Prostate gland (tissue), 2 donors: ENCODE measurements at regions of chr16 and their contacts with region 1.

Region 1: GRCh38 chr16:17301593-17302135 is 169.1 kb downstream of the XYLT1 start:
- DNase-seq: no peak
- H3K4me3 ChIP-seq: no peak overlapping the region
- H3K27ac ChIP-seq: no peak overlapping the region
- H3K4me1 ChIP-seq: peaks cover 19% of the 10 kb centered on the region
- H3K27me3 ChIP-seq: no peaks in the 10 kb centered on the region
- CTCF ChIP-seq: no peak
- POLR2A ChIP-seq: no peak

Region 2: GRCh38 chr16:17149904-17150483 is 151.7 kb before region 1 on chr16:
- intact Hi-C with region 1: no loop called
- DNase-seq: no peak
- H3K4me3 ChIP-seq: no peak overlapping the region
- H3K27ac ChIP-seq: no peak overlapping the region
- H3K4me1 ChIP-seq: no peaks in the 10 kb centered on the region
- H3K27me3 ChIP-seq: no peaks in the 10 kb centered on the region
- CTCF ChIP-seq: no peak
- POLR2A ChIP-seq: no peak

Region 3: GRCh38 chr16:17194190-17194780 is 107.4 kb before region 1 on chr16:
- intact Hi-C with region 1: no loop called
- DNase-seq: peak; percentile 14
- H3K4me3 ChIP-seq: no peak overlapping the region
- H3K27ac ChIP-seq: no peak overlapping the region
- H3K4me1 ChIP-seq: no peaks in the 10 kb centered on the region
- H3K27me3 ChIP-seq: no peaks in the 10 kb centered on the region
- CTCF ChIP-seq: peak; percentile 22 to 54 (median 39)
- POLR2A ChIP-seq: no peak

Region 4: DNA sequence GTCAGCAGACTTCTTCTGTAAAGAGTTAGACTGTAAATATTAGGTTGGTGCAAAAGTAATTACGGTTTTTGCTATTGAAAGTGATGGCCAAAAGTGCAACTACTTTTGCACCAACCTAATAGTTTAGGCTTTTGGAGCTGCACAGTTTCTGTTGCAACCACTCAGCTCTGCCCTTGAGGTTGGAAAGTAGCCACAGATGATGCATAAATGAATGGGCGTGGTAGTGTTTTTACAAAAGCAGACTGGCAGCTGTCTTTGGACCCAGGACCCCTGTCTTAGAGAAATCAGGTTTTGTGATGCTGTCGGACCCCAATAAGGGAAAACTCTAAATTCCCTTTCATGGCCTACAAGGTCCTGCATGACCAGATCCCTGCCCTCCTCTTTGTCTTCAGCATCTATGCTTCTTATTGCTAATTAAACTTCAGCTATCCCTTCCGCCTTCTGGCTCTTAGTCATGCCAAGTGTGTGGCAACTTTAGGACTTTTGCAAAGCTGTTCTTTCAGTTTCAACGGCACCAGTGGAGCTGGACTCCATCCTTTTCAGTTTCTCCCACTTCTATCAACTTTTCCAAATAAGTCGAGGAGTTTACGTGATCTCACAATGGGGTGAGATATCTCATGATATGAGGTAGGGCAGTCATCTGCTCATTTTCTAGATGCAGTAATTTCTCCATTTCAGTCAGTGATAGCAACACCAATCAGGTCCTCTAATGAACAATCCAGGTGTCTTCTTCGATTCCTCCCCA is 63.2 kb before region 1 on chr16:
- intact Hi-C with region 1: no loop called
- DNase-seq: no peak
- H3K4me3 ChIP-seq: no peak overlapping the region
- H3K27ac ChIP-seq: no peak overlapping the region
- H3K4me1 ChIP-seq: no peaks in the 10 kb centered on the region
- H3K27me3 ChIP-seq: no peaks in the 10 kb centered on the region
- CTCF ChIP-seq: no peak
- POLR2A ChIP-seq: no peak

Region 5: GRCh38 chr16:17416461-17417311 is 115.0 kb after region 1 on chr16:
- intact Hi-C with region 1: no loop called
- DNase-seq: no peak
- H3K4me3 ChIP-seq: no peak overlapping the region
- H3K27ac ChIP-seq: no peak overlapping the region
- H3K4me1 ChIP-seq: no peaks in the 10 kb centered on the region
- H3K27me3 ChIP-seq: no peaks in the 10 kb centered on the region
- CTCF ChIP-seq: peak in 1 of 4 experiments; percentile 29
- POLR2A ChIP-seq: no peak

Region 6: DNA sequence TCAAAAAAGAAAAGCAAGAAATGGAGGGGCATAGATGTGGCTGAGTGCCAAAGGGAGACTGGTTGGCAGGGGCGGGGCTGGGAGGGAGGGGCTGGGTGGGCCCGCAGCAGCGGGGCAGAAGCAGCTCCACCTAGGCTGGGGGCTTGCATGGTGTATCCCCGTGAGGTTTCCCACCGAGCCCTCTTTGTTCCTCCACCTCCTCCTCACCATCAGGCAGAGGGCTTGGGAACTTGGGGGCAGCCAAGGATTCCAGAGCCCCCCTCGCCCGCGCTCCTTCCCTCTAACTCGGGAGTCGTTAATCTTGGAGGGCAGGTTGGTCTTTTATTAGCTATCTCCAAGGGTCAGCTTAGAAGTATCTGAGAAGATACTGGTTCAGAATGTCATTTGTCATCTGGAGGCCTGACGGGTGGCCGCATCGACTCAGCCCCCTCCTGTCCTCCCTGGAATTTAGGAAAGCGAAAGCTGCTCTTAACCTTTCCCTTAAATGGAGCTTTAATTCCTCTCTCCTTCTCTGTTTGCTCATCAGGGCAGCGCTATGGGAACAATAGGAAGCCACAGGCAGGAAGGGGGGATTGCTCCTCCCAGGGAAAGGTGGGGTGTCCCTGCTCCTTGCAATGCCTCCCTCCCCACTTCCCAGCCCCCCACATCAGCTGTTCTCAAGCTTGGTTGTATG is 443.4 kb after region 1 on chr16:
- intact Hi-C with region 1: loop called (anchors 10 kb)
- DNase-seq: no peak
- H3K4me3 ChIP-seq: peak overlapping the region; percentile 7 to 9
- H3K27ac ChIP-seq: peak overlapping the region; percentile 4 to 17
- H3K4me1 ChIP-seq: no peaks in the 10 kb centered on the region
- H3K27me3 ChIP-seq: no peaks in the 10 kb centered on the region
- CTCF ChIP-seq: no peak
- POLR2A ChIP-seq: no peak